ENCODE measurements at regions of chr6 and their contacts with region 1.

Region 1: GRCh38 chr6:82363351-82364086 is at the start of gene TPBG:
- DNase-seq: peak; percentile 38
- H3K4me3 ChIP-seq: peak within 1 kb of the TSS; percentile 74 to 97 (median 83)
- H3K27ac ChIP-seq: no peak within 1 kb of the TSS
- H3K4me1 ChIP-seq: peaks cover 4% of the 10 kb centered on the region
- H3K27me3 ChIP-seq: peaks cover 18 to 26% of the 10 kb centered on the region in 2 experiments
- CTCF ChIP-seq: peak; percentile 18 to 46
- POLR2A ChIP-seq: no peak
- total RNA-seq, gene TPBG: 9.0 and 11.4 TPM in 2 replicates

Region 2: GRCh38 chr6:82095091-82095490 is 268.4 kb before region 1 on chr6:
- CTCF ChIA-PET with region 1: no interaction called
- POLR2A ChIA-PET with region 1: no interaction called
- dilution Hi-C with region 1: no loop called
- intact Hi-C with region 1: no loop called
- DNase-seq: no peak
- H3K4me3 ChIP-seq: no peak overlapping the region
- H3K27ac ChIP-seq: no peak overlapping the region
- H3K4me1 ChIP-seq: no peaks in the 10 kb centered on the region
- H3K27me3 ChIP-seq: no peaks in the 10 kb centered on the region
- CTCF ChIP-seq: no peak
- POLR2A ChIP-seq: no peak

Region 3: GRCh38 chr6:82247634-82248232 is 115.8 kb before region 1 on chr6 and contains the start of gene IBTK:
- CTCF ChIA-PET with region 1: no interaction called
- POLR2A ChIA-PET with region 1: no interaction called
- dilution Hi-C with region 1: no loop called
- intact Hi-C with region 1: loop called (anchors 5 kb)
- DNase-seq: peak; percentile 93
- H3K4me3 ChIP-seq: peak within 1 kb of the TSS; percentile 60 to 91 (median 67)
- H3K27ac ChIP-seq: peak within 1 kb of the TSS; percentile 67
- H3K4me1 ChIP-seq: peaks cover 35% of the 10 kb centered on the region
- H3K27me3 ChIP-seq: no peaks in the 10 kb centered on the region
- CTCF ChIP-seq: no peak
- POLR2A ChIP-seq: peak; percentile 87
- total RNA-seq, gene IBTK: 29.5 and 30.5 TPM in 2 replicates

Region 4: GRCh38 chr6:82270881-82271645 is 92.5 kb before region 1 on chr6:
- CTCF ChIA-PET with region 1: interaction called, 6 read pairs
- POLR2A ChIA-PET with region 1: no interaction called
- dilution Hi-C with region 1: no loop called
- intact Hi-C with region 1: loop called (anchors 5 kb)
- DNase-seq: peak; percentile 32
- H3K4me3 ChIP-seq: no peak overlapping the region
- H3K27ac ChIP-seq: no peak overlapping the region
- H3K4me1 ChIP-seq: no peaks in the 10 kb centered on the region
- H3K27me3 ChIP-seq: peaks cover 3 to 4% of the 10 kb centered on the region in 2 experiments
- CTCF ChIP-seq: peak; percentile 27 to 48
- POLR2A ChIP-seq: no peak

Region 5: DNA sequence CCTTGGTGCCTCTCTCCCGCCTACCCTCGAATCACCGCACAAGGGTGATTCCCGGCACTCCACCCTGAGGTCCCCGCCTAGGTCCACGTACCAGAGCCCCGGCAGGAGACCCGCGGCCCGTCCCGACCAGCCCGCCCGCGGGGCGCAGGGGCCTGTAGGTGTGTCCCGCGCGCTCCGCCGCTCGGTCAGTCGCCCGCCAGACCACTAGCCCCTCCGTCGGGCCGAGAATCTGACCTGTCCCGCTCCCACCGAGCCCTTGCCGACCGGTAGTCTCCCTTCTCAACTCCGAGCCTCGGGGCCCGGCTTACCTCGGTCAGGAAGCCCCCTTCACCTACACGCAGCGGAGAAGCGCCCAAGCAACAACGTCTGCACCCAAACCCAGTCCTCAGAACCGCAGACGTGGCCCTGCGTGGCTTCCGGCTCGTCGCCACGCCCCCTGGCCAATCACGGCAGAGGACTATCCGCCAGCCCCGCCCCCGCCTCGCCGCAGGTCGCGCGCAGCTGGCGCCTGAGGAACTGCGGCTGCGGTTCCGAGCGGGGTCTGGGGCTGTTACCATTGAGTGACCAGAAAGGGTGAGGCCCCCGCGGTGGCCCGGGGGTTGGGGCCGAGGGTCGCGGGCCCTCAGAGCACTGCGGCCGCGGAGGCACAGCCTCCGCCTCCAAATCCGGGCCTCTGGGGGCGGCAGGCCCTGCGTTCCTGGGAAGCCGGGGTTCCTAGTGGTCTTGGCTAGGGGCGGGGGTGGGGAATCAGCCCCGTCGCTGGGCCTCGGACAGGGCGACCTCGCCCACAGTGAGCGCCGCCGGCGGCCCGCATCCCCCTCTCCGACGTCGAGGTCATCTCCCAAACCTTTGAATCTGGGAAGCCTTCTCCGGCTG is 829.6 kb after region 1 on chr6 and contains the starts of genes PGM3 and RWDD2A:
- CTCF ChIA-PET with region 1: no interaction called
- POLR2A ChIA-PET with region 1: no interaction called
- dilution Hi-C with region 1: no loop called
- intact Hi-C with region 1: loop called (anchors 10 kb)
- DNase-seq: peak; percentile 93
- H3K4me3 ChIP-seq: peak within 1 kb of the TSS; percentile 52 to 99 (median 94)
- H3K27ac ChIP-seq: peak within 1 kb of the TSS; percentile 49
- H3K4me1 ChIP-seq: peaks cover 23% of the 10 kb centered on the region
- H3K27me3 ChIP-seq: no peaks in the 10 kb centered on the region
- CTCF ChIP-seq: no peak
- POLR2A ChIP-seq: peak; percentile 86
- total RNA-seq, gene PGM3: 70.7 and 74.8 TPM in 2 replicates
- total RNA-seq, gene RWDD2A: 4.3 and 4.5 TPM in 2 replicates

Measured in endothelial cell of umbilical vein (primary cell).